ENCODE measurements at regions of chr2 and their contacts with region 1.

Region 1: DNA sequence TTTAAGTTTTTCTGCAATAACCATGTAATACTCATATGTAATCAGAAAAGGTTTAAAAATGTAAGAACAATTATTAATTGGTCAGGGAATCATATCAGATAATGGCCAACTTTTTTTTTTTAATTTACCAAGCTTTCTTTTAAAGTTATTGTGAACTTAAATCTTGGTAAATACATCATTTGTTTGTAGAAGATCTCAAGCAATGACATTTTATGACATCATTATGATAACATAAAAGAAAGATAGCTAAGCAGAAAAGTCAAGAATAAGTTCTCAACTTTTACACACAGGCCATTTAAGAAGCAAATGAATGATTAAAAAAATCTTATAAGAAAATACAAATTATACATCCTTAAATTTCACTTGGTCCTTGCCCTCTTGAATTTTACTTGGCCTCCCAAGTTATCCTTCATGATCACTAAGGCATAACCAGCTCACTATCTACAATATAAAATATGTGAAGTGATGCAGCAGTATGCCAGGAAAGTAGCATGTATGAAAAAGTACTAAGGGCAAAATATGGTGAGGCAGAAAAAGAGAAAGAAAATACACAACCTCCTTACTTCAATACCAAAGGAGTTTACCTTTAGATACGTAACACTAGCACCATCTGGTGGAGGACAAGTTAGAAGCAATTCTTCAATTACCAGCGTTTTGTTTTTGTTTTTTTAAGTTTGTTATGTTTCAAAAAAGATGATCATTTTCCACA is 116.6 kb downstream of the SRBD1 start:
- DNase-seq: peak; percentile 21
- ATAC-seq: peak; percentile 63
- H3K4me3 ChIP-seq: no peak overlapping the region
- H3K27ac ChIP-seq: no peak overlapping the region
- H3K4me1 ChIP-seq: peaks cover 14% of the 10 kb centered on the region; the same call in 1 of the 2 replicates
- H3K27me3 ChIP-seq: no peaks in the 10 kb centered on the region
- CTCF ChIP-seq: peak; percentile 64 to 75 (median 74)
- EP300 ChIP-seq: no peak
- POLR2A ChIP-seq: no peak
- RAD21 ChIP-seq: peak; percentile 88

Region 2: DNA sequence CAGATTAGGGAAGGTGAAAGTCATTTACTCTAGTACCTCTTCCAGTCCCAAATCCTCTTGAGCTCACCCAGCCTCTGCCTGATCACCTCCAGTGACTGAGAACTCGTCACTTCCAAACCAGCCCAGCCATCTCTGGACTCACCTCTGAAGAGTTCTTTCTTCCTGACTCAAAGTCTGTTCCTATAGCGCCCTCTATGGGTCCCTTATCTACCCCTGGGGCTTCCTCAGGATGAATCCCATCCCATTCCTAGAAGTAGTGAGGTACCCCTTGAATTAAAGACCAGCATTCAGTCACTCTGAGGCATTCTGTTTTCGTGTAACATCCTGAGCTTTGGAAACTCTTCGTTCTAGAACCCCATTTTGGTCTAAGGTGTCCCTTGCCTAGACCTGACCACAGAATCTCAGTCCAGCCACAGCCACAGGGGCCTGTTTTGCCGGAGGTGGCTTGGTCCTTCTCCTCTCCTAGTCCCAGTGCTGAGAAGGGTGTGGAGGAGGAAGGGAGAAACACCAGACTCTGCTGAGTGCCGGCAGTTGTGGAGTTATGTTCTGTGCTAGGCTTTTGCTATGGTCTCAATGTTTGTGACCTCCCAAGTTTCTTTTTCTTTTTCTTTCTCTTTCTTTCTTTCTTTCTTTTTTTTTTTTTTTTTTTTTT is 520.2 kb before region 1 on chr2:
- CTCF ChIA-PET with region 1: interaction called, 227 read pairs
- POLR2A ChIA-PET with region 1: no interaction called
- RAD21 ChIA-PET with region 1: interaction called, 4 read pairs
- SMC1A ChIA-PET with region 1: interaction called, 10 read pairs
- in situ Hi-C with region 1: loop called (anchors 5 kb)
- intact Hi-C with region 1: no loop called
- DNase-seq: no peak
- ATAC-seq: peak; percentile 72
- H3K4me3 ChIP-seq: no peak overlapping the region
- H3K27ac ChIP-seq: no peak overlapping the region
- H3K4me1 ChIP-seq: no peaks in the 10 kb centered on the region
- H3K27me3 ChIP-seq: no peaks in the 10 kb centered on the region; a peak in 1 of 4 replicates
- CTCF ChIP-seq: peak; percentile 37 to 54 (median 39); a peak in 5 of 6 replicates
- EP300 ChIP-seq: no peak
- POLR2A ChIP-seq: no peak
- RAD21 ChIP-seq: 0 out of 2 replicates have a peak, but pooled peaks have one; percentile 44

Region 3: DNA sequence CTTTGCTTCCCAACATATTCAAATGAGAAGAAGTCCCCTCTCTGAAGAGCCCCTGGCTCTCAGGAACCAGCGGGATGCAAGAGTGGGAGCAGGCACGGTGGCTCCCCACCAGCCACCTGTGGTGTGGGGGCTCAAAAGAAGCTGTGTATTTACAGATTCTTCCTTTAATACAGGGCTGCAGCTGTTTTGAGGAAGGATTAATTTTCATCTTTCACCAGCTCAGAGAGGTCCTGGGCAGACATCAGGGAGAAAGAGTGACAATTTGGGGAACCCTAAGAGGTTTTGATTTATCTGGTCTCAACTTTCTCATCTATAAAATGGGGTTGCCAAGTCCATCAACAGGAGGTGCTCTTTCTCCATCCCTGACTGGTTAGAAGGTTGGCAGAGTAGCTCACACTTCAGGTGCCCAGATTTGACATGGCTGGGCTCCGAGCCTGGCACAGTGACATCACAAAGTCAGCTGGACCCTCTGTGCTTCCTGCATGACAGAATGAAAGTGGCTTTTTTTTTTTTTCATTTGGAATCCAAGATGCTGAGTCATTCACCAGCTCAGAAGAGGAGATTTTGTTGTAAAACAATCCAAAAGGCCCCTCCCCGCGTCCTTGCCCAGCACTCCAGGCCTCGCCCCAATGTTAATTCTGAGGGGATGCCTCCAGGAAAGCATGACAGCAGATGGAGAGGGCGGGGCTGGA is 469.7 kb before region 1 on chr2:
- CTCF ChIA-PET with region 1: interaction called, 10 read pairs
- POLR2A ChIA-PET with region 1: no interaction called
- RAD21 ChIA-PET with region 1: interaction called, 3 read pairs
- SMC1A ChIA-PET with region 1: interaction called, 3 read pairs
- in situ Hi-C with region 1: no loop called
- intact Hi-C with region 1: no loop called
- DNase-seq: no peak
- ATAC-seq: no peak
- H3K4me3 ChIP-seq: no peak overlapping the region
- H3K27ac ChIP-seq: no peak overlapping the region
- H3K4me1 ChIP-seq: no peaks in the 10 kb centered on the region
- H3K27me3 ChIP-seq: no peaks in the 10 kb centered on the region; a peak in 2 of 4 replicates
- CTCF ChIP-seq: peak in 2 of 3 experiments; percentile 13 to 24; a peak in 1 of 6 replicates
- EP300 ChIP-seq: no peak
- POLR2A ChIP-seq: no peak
- RAD21 ChIP-seq: no peak

Region 4: GRCh38 chr2:45439788-45440773 is 54.3 kb before region 1 on chr2:
- CTCF ChIA-PET with region 1: interaction called, 19 read pairs
- POLR2A ChIA-PET with region 1: no interaction called
- RAD21 ChIA-PET with region 1: interaction called, 7 read pairs
- SMC1A ChIA-PET with region 1: interaction called, 15 read pairs
- in situ Hi-C with region 1: no loop called
- intact Hi-C with region 1: no loop called
- DNase-seq: peak; percentile 12
- ATAC-seq: peak; percentile 87
- H3K4me3 ChIP-seq: no peak overlapping the region
- H3K27ac ChIP-seq: no peak overlapping the region
- H3K4me1 ChIP-seq: peaks cover 11% of the 10 kb centered on the region
- H3K27me3 ChIP-seq: no peaks in the 10 kb centered on the region
- CTCF ChIP-seq: peak in 2 of 3 experiments; percentile 5 to 18; a peak in 2 of 6 replicates
- EP300 ChIP-seq: no peak
- POLR2A ChIP-seq: no peak
- RAD21 ChIP-seq: peak; percentile 26; the same call in 1 of the 2 replicates

Region 5: GRCh38 chr2:45483997-45484396 is 10.4 kb before region 1 on chr2:
- CTCF ChIA-PET with region 1: interaction called, 25 read pairs
- POLR2A ChIA-PET with region 1: no interaction called
- RAD21 ChIA-PET with region 1: interaction called, 9 read pairs
- SMC1A ChIA-PET with region 1: interaction called, 22 read pairs
- in situ Hi-C with region 1: no loop called
- intact Hi-C with region 1: no loop called
- DNase-seq: no peak
- ATAC-seq: peak; percentile 72
- H3K4me3 ChIP-seq: no peak overlapping the region
- H3K27ac ChIP-seq: no peak overlapping the region
- H3K4me1 ChIP-seq: 0 out of 2 replicates have a peak, but pooled peaks cover 3% of the 10 kb centered on the region
- H3K27me3 ChIP-seq: no peaks in the 10 kb centered on the region
- CTCF ChIP-seq: 0 out of 6 replicates have a peak, but pooled peaks of 2 of the 3 experiments have one; percentile 10 to 12
- EP300 ChIP-seq: no peak
- POLR2A ChIP-seq: no peak
- RAD21 ChIP-seq: no peak

Region 6: GRCh38 chr2:45541450-45541849 is 47.0 kb after region 1 on chr2:
- CTCF ChIA-PET with region 1: no interaction called
- POLR2A ChIA-PET with region 1: no interaction called
- RAD21 ChIA-PET with region 1: no interaction called
- SMC1A ChIA-PET with region 1: no interaction called
- in situ Hi-C with region 1: no loop called
- intact Hi-C with region 1: no loop called
- DNase-seq: no peak
- ATAC-seq: no peak
- H3K4me3 ChIP-seq: no peak overlapping the region
- H3K27ac ChIP-seq: no peak overlapping the region
- H3K4me1 ChIP-seq: no peaks in the 10 kb centered on the region
- H3K27me3 ChIP-seq: no peaks in the 10 kb centered on the region
- CTCF ChIP-seq: no peak
- EP300 ChIP-seq: no peak
- POLR2A ChIP-seq: no peak
- RAD21 ChIP-seq: no peak

Measured in GM12878 (cell line).